ENCODE measurements at regions of chr13 and their contacts with region 1.

Region 1: DNA sequence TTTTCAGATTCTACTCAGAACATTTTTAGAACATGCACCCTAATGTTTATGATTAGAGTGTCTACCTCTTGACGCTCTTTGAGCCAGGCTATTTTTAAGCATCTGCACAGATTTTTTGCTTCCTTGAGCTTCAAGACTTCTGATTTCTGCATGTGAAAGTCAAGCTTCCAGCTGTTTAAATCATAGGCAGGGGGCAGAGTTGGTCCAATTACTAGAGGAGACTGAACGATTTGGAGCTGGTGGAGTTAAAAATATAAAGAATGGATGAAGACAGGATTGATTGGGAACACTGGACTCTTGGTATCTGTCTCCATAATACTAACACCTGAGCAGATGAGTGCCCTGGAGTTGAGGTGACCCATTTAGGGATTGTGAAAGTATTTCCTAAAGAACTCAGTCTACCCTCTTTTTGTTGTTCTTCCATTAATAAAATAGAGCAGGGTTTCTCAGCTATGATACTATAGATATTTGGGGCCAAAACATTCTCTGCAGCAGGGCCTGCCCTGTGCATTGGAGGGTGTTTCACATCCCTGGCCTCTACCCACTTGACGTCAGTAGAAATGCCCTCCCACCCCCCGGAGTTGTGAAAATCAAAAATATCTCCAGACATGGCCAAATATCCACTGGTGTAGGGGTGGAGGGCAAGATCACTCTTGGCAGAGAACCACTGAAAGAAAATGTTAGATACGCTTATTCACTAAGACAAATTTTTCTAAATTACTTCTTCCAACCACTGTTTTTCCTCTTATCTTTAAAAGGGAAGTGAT is 160.1 kb downstream of the COG6 start:
- DNase-seq: peak; percentile 79
- H3K4me3 ChIP-seq: no peak overlapping the region
- H3K27ac ChIP-seq: no peak overlapping the region
- H3K4me1 ChIP-seq: peaks cover 17% of the 10 kb centered on the region
- H3K27me3 ChIP-seq: no peaks in the 10 kb centered on the region
- CTCF ChIP-seq: peak; percentile 10 to 22
- POLR2A ChIP-seq: no peak

Region 2: DNA sequence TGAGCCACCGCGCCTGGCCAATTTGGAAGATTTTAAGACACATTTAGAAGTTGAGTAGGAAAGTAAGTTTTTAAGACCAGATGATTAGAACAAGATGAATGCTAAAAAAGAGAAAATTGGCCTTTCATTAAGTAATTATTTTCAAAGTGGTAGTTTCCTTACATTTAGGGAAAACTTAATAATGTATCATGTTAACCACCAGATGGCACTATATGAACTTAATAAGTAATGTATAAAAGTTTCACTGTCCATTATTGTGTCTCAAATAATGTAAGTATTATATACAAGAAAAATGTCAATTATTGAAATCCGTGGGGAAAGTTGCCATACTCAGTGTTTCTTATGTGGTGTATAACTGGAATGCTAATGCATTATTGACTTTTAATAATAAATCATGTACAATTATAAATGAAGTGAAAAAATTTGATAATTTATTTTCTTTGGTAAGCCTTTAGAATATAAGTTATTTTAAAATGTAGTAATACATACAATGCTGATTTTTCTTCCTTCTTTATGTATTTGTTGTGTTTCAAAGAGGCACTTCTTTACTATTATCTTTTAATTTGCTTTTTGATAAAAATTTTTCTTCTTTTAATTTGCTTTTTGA is 130.9 kb before region 1 on chr13:
- CTCF ChIA-PET with region 1: interaction called, 12 read pairs
- POLR2A ChIA-PET with region 1: no interaction called
- dilution Hi-C with region 1: no loop called
- intact Hi-C with region 1: no loop called
- DNase-seq: peak; percentile 54
- H3K4me3 ChIP-seq: no peak overlapping the region
- H3K27ac ChIP-seq: no peak overlapping the region
- H3K4me1 ChIP-seq: no peaks in the 10 kb centered on the region
- H3K27me3 ChIP-seq: no peaks in the 10 kb centered on the region
- CTCF ChIP-seq: peak in 1 of 2 donors; percentile 8
- POLR2A ChIP-seq: no peak

Region 3: GRCh38 chr13:39862900-39863299 is 47.4 kb after region 1 on chr13:
- CTCF ChIA-PET with region 1: no interaction called
- POLR2A ChIA-PET with region 1: no interaction called
- dilution Hi-C with region 1: no loop called
- intact Hi-C with region 1: loop called (anchors 1 kb)
- DNase-seq: peak; percentile 83
- H3K4me3 ChIP-seq: no peak overlapping the region
- H3K27ac ChIP-seq: peak overlapping the region; percentile 76
- H3K4me1 ChIP-seq: peaks cover 37% of the 10 kb centered on the region
- H3K27me3 ChIP-seq: no peaks in the 10 kb centered on the region
- CTCF ChIP-seq: no peak
- POLR2A ChIP-seq: no peak

Region 4: GRCh38 chr13:39876258-39876657 is 60.7 kb after region 1 on chr13:
- CTCF ChIA-PET with region 1: interaction called, 7 read pairs
- POLR2A ChIA-PET with region 1: no interaction called
- dilution Hi-C with region 1: no loop called
- intact Hi-C with region 1: loop called (anchors 1 kb)
- DNase-seq: peak; percentile 90
- H3K4me3 ChIP-seq: no peak overlapping the region
- H3K27ac ChIP-seq: peak overlapping the region; percentile 98
- H3K4me1 ChIP-seq: peaks cover 67% of the 10 kb centered on the region
- H3K27me3 ChIP-seq: no peaks in the 10 kb centered on the region
- CTCF ChIP-seq: no peak
- POLR2A ChIP-seq: peak; percentile 25

Region 5: GRCh38 chr13:39942552-39943273 is 127.2 kb after region 1 on chr13:
- CTCF ChIA-PET with region 1: interaction called, 24 read pairs
- POLR2A ChIA-PET with region 1: no interaction called
- dilution Hi-C with region 1: no loop called
- intact Hi-C with region 1: no loop called
- DNase-seq: peak; percentile 71
- H3K4me3 ChIP-seq: no peak overlapping the region
- H3K27ac ChIP-seq: no peak overlapping the region
- H3K4me1 ChIP-seq: peaks cover 3% of the 10 kb centered on the region
- H3K27me3 ChIP-seq: no peaks in the 10 kb centered on the region
- CTCF ChIP-seq: peak; percentile 86 to 94
- POLR2A ChIP-seq: no peak